Right ventricle myocardium inferior (tissue), 1 donor: ENCODE measurements at regions of chr19 and their contacts with region 1.

Region 1: GRCh38 chr19:40549007-40549708 is 27.5 kb upstream of the SHKBP1 start:
- DNase-seq: peak; percentile 85
- ATAC-seq: peak; percentile 54

Region 2: GRCh38 chr19:40465557-40466150 is 83.5 kb before region 1 on chr19 and contains the start of gene BLVRB:
- intact Hi-C with region 1: no loop called
- DNase-seq: peak; percentile 100
- ATAC-seq: peak; percentile 97
- total RNA-seq, gene BLVRB: 127 TPM

Region 3: DNA sequence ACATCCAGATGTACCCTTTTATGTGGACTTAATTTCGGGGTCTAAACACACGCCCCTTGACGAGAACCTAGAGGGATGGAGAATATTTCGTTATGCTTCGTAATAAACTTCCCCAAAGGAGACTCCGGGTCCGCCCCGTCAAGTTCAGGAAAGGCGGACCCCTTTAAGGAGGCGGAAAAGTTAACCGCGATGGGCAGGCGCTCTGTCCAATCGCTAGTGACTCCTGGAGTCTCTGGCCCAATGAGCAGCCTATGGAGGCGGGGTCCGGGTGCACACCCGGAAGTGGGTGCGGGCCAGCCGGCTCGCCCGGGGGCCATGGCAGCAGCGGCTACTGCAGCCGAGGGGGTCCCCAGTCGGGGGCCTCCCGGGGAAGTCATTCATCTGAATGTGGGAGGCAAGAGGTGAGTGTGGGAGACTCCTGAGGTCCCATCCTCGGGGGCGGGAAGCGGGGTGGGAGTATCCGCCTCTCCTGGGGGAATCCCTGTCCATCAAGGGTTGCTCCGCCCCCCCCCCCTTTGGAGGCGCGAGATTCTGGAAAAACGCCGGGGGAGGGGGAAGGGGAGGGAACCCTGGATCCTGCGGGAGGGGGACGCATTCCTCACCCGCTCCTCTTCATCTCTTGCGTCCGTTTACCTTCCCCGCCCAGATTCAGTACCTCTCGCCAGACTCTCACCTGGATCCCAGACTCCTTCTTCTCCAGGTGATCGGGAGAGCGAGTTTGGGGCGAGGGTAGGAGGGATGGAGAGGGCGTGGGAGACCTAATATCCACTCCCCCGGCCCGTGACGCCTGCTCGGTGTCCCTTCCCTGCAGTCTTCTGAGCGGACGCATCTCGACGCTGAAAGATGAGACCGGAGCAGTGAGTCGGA is 27.7 kb after region 1 on chr19 and contains the start of gene SHKBP1:
- intact Hi-C with region 1: no loop called
- DNase-seq: peak; percentile 96
- ATAC-seq: peak; percentile 98
- total RNA-seq, gene SHKBP1: 20.6 TPM

Region 4: GRCh38 chr19:40592170-40592569 is 43.0 kb after region 1 on chr19:
- intact Hi-C with region 1: loop called (anchors 2 kb)
- DNase-seq: no peak
- ATAC-seq: no peak